ENCODE measurements at regions of chr11 and their contacts with region 1.

Region 1: DNA sequence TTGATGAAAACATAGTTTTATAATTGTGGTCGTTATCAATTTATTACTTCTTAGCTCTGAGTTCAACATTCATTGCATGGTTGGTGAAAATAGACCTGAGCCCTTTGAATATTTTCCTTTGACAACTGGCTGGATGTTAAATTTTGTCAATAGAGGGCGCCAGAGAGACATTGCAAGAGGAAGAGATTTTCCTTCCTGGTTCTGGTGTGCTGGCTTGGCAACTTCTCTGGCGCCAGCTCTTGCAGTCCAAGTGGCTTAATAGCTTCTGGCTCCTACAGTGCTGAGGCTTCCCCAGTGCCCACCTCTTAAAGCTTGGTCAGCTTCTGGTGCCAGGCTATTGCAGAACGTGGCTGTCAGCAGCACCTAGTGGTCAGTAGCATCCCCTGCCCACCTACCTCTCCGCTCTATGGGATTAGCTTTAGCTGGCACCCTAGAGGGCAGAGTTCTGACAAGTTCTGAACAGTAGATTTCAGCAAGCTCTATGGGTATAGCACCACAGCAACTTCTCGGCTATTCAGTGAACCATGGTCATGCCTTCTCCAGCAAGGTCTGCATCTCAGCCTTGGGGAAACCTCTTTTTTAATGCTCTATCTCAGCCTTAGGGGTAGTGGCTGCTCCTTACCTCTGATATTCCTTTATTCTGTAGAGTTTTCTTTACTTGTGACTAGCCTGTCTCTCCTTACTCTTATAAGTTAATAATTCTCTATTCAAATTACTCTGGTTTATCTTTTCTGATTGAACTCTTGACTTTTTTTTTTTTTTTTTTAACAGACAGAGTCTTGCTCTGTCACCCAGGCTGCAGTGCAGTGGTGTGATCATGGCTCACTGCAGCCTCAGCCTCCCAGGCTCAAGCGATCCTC is 59.4 kb downstream of the ACER3 start:
- DNase-seq: peak; percentile 53 to 68 (median 63)
- H3K4me3 ChIP-seq: no peak overlapping the region
- H3K27ac ChIP-seq: no peak overlapping the region
- H3K4me1 ChIP-seq: peaks cover 3% of the 10 kb centered on the region
- H3K27me3 ChIP-seq: no peaks in the 10 kb centered on the region
- CTCF ChIP-seq: peak; percentile 58 to 76 (median 70)
- EP300 ChIP-seq: no peak
- POLR2A ChIP-seq: no peak

Region 2: DNA sequence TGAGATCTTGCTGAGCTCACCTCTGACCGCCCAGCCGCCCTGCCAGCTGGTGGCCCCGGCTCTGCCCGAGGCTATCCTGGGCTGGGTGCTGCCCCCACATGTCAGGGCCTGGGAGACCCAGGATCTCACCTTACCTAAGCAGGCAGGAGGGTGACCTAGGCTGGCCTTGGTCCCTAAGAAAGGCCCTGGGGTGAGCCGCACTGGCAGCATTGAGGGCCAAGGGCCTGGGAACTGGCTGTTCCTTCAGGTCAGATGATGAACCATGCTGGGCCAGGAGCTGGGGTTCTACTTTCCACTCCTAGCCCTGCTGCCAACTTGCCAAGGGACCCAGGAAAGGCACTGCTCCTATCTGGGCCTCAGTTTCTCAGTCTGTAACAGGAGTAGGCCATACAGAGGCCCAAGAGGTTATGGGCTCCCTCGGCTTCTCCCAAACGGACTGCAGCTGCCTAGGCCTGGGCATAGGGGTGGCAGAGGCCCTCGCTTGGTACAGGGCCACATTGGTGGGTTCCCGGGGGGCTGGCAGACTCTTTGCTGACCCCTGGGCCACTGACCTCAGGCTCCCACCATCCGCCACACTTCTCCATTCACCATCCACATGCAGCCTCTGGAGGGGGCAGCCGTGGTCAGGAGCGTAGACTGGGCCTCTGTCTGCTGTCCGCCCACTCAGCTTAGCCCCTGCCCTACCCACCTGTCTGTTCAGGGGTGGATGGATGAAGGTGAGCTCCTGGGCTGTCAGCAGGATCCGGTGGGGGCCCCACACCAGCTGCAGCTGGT is 204.1 kb before region 1 on chr11:
- intact Hi-C with region 1: loop called in 1 of 4 experiments (anchors 5 kb)
- DNase-seq: no peak
- H3K4me3 ChIP-seq: no peak overlapping the region
- H3K27ac ChIP-seq: no peak overlapping the region
- H3K4me1 ChIP-seq: no peaks in the 10 kb centered on the region
- H3K27me3 ChIP-seq: no peaks in the 10 kb centered on the region
- CTCF ChIP-seq: no peak
- EP300 ChIP-seq: no peak
- POLR2A ChIP-seq: no peak

Region 3: GRCh38 chr11:76807206-76807875 is 112.8 kb before region 1 on chr11:
- intact Hi-C with region 1: loop called in 3 of 4 experiments (anchors 5 kb)
- DNase-seq: peak; percentile 74 to 91 (median 86)
- H3K4me3 ChIP-seq: no peak overlapping the region
- H3K27ac ChIP-seq: no peak overlapping the region
- H3K4me1 ChIP-seq: peaks cover 10% of the 10 kb centered on the region
- H3K27me3 ChIP-seq: no peaks in the 10 kb centered on the region
- CTCF ChIP-seq: peak in 2 of 3 donors; percentile 74 to 76
- EP300 ChIP-seq: no peak
- POLR2A ChIP-seq: no peak

Region 4: GRCh38 chr11:77019976-77020595 is 100.0 kb after region 1 on chr11:
- intact Hi-C with region 1: no loop called
- DNase-seq: no peak
- H3K4me3 ChIP-seq: no peak overlapping the region
- H3K27ac ChIP-seq: no peak overlapping the region
- H3K4me1 ChIP-seq: no peaks in the 10 kb centered on the region
- H3K27me3 ChIP-seq: no peaks in the 10 kb centered on the region
- CTCF ChIP-seq: no peak
- EP300 ChIP-seq: no peak
- POLR2A ChIP-seq: no peak

Region 5: GRCh38 chr11:77175869-77176539 is 255.9 kb after region 1 on chr11:
- intact Hi-C with region 1: no loop called
- DNase-seq: no peak
- H3K4me3 ChIP-seq: no peak overlapping the region
- H3K27ac ChIP-seq: no peak overlapping the region
- H3K4me1 ChIP-seq: peaks cover 7% of the 10 kb centered on the region
- H3K27me3 ChIP-seq: no peaks in the 10 kb centered on the region
- CTCF ChIP-seq: no peak
- EP300 ChIP-seq: no peak
- POLR2A ChIP-seq: no peak